Left ventricle myocardium superior (tissue), 1 donor: ENCODE measurements at regions of chr20 and their contacts with region 1.

Region 1: DNA sequence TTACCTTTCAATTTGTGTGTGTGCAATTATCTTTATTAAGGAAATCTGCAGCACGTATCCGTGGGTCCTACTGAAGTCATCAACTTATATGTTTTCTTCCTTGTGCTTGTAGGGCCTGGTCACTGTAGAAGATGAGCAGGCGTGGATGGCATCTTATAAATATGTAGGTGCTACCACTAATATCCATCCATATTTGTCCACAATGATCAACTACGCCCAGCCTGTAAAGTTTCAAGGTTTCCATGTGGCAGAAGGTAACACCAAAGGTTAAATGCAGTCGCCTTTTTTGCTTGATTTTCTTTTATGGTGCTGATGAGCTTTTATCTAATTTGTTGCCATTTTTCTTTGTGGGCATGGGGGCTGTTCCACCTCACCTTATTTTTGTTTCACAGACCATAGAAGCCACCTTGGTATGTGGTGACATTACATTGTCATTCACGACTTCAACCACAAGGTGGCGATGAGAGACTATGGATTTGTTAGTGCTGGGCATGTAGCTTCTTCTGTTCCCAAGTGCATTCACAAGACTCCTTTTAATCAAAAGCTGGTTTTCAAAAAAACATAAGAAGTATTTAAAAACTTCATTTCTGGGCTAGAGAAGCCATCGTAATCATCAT is 106.5 kb upstream of the LAMP5 start:
- DNase-seq: no peak
- ATAC-seq: peak; percentile 76

Region 2: DNA sequence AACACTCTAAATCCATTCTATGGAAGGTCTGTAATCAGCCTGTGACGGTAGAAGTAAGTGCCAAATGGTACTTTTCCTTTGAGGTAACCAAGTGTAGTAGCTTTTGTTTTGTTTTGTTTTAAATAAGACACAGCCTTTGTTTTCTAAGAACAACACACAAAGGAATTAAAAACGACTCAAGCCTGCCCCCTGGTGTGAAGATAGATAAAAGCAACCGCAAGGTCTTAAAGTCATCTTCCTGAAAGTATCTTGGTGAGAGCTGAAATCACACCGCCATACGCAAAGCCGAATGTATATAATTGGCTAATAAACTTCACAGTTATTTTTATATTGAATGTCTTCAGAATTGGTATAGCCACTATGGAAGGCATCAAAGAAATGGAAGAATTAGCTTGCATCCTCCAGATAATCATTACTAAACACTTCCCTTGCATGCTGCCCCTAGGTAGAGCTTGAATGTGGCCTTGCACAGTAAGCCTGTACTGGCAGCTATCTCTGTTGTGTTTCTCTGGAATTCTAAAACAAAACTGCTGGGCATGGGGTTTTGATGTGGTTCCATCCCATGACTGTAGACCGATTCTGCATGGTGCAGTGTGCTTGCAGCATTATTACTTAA is 202.1 kb after region 1 on chr20:
- intact Hi-C with region 1: loop called (anchors 2 kb)
- DNase-seq: no peak
- ATAC-seq: no peak